ENCODE measurements at regions of chr12 and their contacts with region 1.

Region 1: DNA sequence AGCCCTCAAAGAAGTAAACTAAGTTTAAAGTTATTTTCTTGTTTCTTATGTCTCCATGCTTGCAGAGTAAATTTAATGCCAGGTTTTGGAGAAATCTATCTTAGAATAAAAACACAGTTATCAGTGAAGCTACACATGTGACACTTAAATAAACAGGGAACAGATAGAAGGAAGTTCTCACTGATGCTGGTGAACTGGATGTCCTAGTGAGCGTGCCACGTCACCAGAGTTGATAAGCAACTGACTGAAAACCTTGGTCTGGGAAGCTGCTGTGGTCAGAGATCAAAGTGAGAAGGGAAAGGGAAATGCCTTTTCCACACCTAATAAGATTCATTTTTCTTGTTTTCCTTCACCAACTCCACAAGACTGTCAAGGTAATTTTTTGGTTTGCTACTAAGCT is 74.8 kb upstream of the PCED1B start:
- DNase-seq: no peak
- ATAC-seq: no peak

Region 2: GRCh38 chr12:46342562-46343033 is 662.0 kb before region 1 on chr12:
- intact Hi-C with region 1: loop called (anchors 10 kb)
- DNase-seq: no peak
- ATAC-seq: peak; percentile 88

Region 3: GRCh38 chr12:47079468-47079980 is 74.9 kb after region 1 on chr12 and contains the starts of genes AMIGO2 and PCED1B:
- intact Hi-C with region 1: no loop called
- DNase-seq: peak; percentile 86
- ATAC-seq: peak; percentile 84
- total RNA-seq, gene AMIGO2: 5.3 TPM
- total RNA-seq, gene PCED1B: 5.0 TPM

Measured in sciatic nerve (tissue), 2 donors.